ENCODE measurements at regions of chr14 and their contacts with region 1.

Region 1: DNA sequence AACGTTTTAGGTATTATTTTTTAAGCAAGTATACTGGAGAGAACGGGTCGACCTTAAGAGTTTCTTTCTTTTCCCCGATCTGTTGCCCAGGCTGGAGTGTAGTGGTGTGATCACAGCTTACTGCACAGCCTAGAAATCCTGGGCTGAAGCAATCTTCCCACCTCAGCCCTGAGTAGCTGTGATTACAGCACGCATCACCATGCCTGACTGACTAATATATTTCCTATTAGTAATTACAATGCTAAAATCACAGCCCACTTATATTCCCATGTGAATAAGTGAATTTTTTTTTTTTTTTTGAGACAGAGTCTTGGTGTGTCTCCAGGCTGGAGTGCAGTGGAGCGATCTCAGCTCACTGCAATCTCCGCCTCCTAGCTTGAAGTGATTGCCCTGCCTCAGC is 50.4 kb downstream of the DICER1 start:
- DNase-seq: peak; percentile 32
- ATAC-seq: no peak; the same call in 1 of the 2 replicates
- H3K4me3 ChIP-seq: no peak overlapping the region
- H3K27ac ChIP-seq: no peak overlapping the region
- H3K4me1 ChIP-seq: no peaks in the 10 kb centered on the region
- H3K27me3 ChIP-seq: no peaks in the 10 kb centered on the region
- CTCF ChIP-seq: no peak
- POLR2A ChIP-seq: no peak
- RAD21 ChIP-seq: no peak

Region 2: GRCh38 chr14:95149142-95149874 is 42.3 kb after region 1 on chr14:
- CTCF ChIA-PET with region 1: interaction called, 3 read pairs
- POLR2A ChIA-PET with region 1: interaction called, 10 read pairs
- dilution Hi-C with region 1: no loop called
- in situ Hi-C with region 1: no loop called
- intact Hi-C with region 1: no loop called
- DNase-seq: no peak
- ATAC-seq: no peak
- H3K4me3 ChIP-seq: no peak overlapping the region
- H3K27ac ChIP-seq: no peak overlapping the region
- H3K4me1 ChIP-seq: peaks cover 5% of the 10 kb centered on the region
- H3K27me3 ChIP-seq: no peaks in the 10 kb centered on the region
- CTCF ChIP-seq: no peak
- POLR2A ChIP-seq: no peak
- RAD21 ChIP-seq: no peak

Measured in IMR-90 (cell line).